WTC11 (cell line): ENCODE measurements at regions of chr13 and their contacts with region 1.

Region 1: DNA sequence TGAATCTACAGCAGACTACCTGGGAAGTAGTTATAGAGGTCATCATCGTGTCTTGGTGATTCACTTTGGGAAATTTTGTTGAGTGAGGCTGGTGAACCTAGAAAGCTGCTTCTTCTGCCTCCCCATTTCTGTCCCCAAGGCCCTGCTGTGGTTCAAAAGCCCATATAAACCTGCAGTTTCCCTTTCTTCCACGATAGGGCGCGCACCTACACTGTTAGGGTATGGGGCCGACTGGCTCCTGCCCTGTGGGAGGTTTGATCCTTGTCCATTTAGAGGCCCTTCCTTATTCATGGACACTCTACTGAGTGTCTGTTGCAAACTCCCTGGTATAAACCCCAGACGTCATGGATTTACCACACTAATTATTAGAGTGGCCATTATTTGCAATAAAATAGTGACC is 191.8 kb downstream of the GGACT start:
- DNase-seq: peak; percentile 59
- ATAC-seq: peak; percentile 93
- H3K4me3 Mint-ChIP-seq: no peak overlapping the region
- H3K27ac Mint-ChIP-seq: 0 out of 2 replicates have a peak overlapping the region, but pooled peaks have one; percentile 63
- H3K4me1 Mint-ChIP-seq: peaks cover 59% of the 10 kb centered on the region
- H3K27me3 Mint-ChIP-seq: no peaks in the 10 kb centered on the region
- CTCF ChIP-seq: no peak; the same call in 1 of the 2 replicates

Region 2: GRCh38 chr13:100409132-100409531 is 12.4 kb after region 1 on chr13:
- CTCF ChIA-PET with region 1: no interaction called
- POLR2A ChIA-PET with region 1: no interaction called
- DNase-seq: no peak
- ATAC-seq: no peak
- H3K4me3 Mint-ChIP-seq: no peak overlapping the region
- H3K27ac Mint-ChIP-seq: no peak overlapping the region
- H3K4me1 Mint-ChIP-seq: peaks cover 7% of the 10 kb centered on the region
- H3K27me3 Mint-ChIP-seq: no peaks in the 10 kb centered on the region
- CTCF ChIP-seq: no peak

Region 3: GRCh38 chr13:100440751-100441425 is 44.1 kb after region 1 on chr13:
- CTCF ChIA-PET with region 1: no interaction called
- POLR2A ChIA-PET with region 1: no interaction called
- DNase-seq: no peak
- ATAC-seq: no peak
- H3K4me3 Mint-ChIP-seq: no peak overlapping the region
- H3K27ac Mint-ChIP-seq: peak overlapping the region; percentile 76
- H3K4me1 Mint-ChIP-seq: peaks cover 63% of the 10 kb centered on the region
- H3K27me3 Mint-ChIP-seq: no peaks in the 10 kb centered on the region
- CTCF ChIP-seq: no peak

Region 4: GRCh38 chr13:100514788-100515409 is 118.1 kb after region 1 on chr13:
- CTCF ChIA-PET with region 1: interaction called, 45 read pairs
- POLR2A ChIA-PET with region 1: no interaction called
- DNase-seq: peak; percentile 90
- ATAC-seq: peak; percentile 65
- H3K4me3 Mint-ChIP-seq: no peak overlapping the region
- H3K27ac Mint-ChIP-seq: peak overlapping the region; percentile 84
- H3K4me1 Mint-ChIP-seq: peaks cover 92% of the 10 kb centered on the region
- H3K27me3 Mint-ChIP-seq: no peaks in the 10 kb centered on the region
- CTCF ChIP-seq: peak; percentile 83